ENCODE measurements at regions of chr6 and their contacts with region 1.

Region 1: GRCh38 chr6:152343735-152344360 is 293.3 kb downstream of the SYNE1 start:
- DNase-seq: peak in 2 of 5 donors; percentile 34 to 40
- ATAC-seq: peak; percentile 67 to 92 (median 90)
- H3K4me3 ChIP-seq: no peak overlapping the region
- H3K27ac ChIP-seq: peak overlapping the region in 8 of 12 donors; percentile 5 to 62 (median 36)
- H3K4me1 ChIP-seq: peaks cover 0 to 11% (median 0%) of the 10 kb centered on the region in 12 donors
- H3K27me3 ChIP-seq: no peaks in the 10 kb centered on the region
- CTCF ChIP-seq: no peak
- POLR2A ChIP-seq: no peak

Region 2: GRCh38 chr6:152110886-152111820 is 232.7 kb before region 1 on chr6:
- intact Hi-C with region 1: no loop called
- DNase-seq: peak; percentile 63 to 84 (median 74)
- ATAC-seq: peak; percentile 96 to 97 (median 96)
- H3K4me3 ChIP-seq: no peak overlapping the region
- H3K27ac ChIP-seq: peak overlapping the region; percentile 36 to 85 (median 78)
- H3K4me1 ChIP-seq: peaks cover 0 to 28% (median 21%) of the 10 kb centered on the region in 12 donors
- H3K27me3 ChIP-seq: no peaks in the 10 kb centered on the region
- CTCF ChIP-seq: no peak
- POLR2A ChIP-seq: no peak

Region 3: DNA sequence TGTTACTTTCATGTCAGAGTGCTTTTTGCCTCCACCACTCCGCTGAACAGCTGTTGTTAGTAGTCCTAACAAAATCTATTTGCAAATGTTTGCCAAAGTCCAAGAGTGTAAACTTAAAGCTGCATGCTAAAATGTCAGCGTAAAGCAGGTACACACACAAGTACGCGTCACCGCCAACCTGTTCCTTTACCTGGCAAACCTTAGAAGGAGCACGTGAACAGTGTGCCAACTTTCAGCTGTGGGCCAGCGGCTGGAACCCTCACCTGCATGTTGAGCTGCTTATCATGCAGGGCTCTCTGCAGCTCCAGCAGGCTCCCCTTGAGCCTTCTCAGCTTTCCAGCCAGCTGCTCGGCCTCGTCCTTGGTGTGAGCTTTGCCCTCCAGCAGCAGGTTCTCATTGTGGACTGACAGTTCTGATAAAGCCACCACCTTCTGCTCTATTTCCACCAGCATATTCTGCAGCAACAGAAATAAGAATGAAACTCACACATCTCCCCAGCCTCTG is 66.0 kb before region 1 on chr6:
- intact Hi-C with region 1: loop called in 1 of 10 experiments (anchors 5 kb)
- DNase-seq: peak in 3 of 5 donors; percentile 41 to 74 (median 63)
- ATAC-seq: peak; percentile 73 to 89 (median 80)
- H3K4me3 ChIP-seq: no peak overlapping the region
- H3K27ac ChIP-seq: peak overlapping the region in 9 of 12 donors; percentile 8 to 60 (median 51)
- H3K4me1 ChIP-seq: peaks cover 2 to 34% (median 14%) of the 10 kb centered on the region in 12 donors
- H3K27me3 ChIP-seq: no peaks in the 10 kb centered on the region
- CTCF ChIP-seq: no peak
- POLR2A ChIP-seq: no peak

Region 4: DNA sequence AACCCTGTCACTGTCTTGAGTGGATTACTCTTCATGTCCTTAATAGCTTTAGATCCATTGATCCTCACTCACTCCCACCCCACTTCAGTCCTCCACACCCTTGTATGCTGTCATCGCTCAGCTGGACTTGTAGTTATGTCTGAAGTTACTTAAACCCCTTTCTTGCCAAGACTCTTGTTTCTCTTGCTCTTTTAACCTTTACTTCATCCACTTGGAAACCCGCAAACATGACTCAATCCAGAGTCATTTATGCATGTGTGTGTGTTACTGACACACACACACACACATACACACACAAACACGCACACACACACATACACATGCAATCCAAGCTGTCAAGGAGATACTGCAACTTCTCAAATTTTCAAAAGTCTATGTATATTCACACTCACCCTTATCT is 48.5 kb before region 1 on chr6:
- intact Hi-C with region 1: loop called in 4 of 10 experiments (anchors 5 kb)
- DNase-seq: no peak
- ATAC-seq: peak in 3 of 4 donors; percentile 29 to 59 (median 52)
- H3K4me3 ChIP-seq: no peak overlapping the region
- H3K27ac ChIP-seq: peak overlapping the region in 1 of 12 donors; percentile 40
- H3K4me1 ChIP-seq: peaks cover 0 to 46% (median 23%) of the 10 kb centered on the region in 12 donors
- H3K27me3 ChIP-seq: no peaks in the 10 kb centered on the region
- CTCF ChIP-seq: no peak
- POLR2A ChIP-seq: no peak